ENCODE measurements at regions of chr15 and their contacts with region 1.

Region 1: DNA sequence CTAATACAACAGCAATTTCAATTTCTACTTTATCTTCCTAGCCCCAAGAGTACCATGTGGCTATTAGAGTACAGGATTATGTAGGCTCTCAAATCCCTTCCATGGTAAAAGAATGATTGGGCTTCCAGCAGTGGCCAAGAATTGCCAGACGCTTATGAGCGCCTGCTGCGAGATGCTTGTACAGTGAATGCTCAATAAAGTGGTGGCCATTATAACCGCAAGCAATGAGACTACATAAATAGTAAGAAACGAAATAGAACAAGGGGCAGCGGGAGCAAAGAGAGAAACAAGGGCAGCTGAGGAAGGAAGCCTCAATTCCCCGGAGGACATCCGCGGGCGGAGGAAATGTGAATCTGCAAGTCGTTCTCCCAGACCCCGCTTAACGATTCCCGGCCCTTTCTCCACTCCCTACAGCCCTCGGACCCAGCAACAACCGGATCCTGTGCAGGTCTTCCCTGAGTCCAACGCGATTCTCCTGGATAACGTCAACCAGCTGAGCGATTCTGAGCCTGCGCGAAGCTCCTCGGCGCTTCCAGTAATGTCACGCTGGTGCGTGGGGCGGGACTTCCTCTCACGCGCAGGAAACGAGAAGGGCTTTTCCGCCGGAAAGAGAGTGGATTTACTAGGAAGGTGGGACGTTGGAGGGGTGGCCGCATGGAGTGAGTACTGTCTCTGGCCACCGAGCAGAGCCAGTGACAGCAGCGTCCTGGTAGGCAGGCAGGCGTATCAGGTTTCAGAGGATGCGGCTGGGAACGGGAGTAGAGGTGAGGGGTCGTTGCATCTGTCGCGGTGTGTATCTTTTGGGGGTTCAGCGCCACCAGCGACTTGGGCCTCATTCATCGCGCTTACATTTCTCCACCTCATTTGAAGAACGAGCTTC is 40.5 kb upstream of the AP3B2 start:
- DNase-seq: peak; percentile 90
- H3K4me3 Mint-ChIP-seq: peak overlapping the region; percentile 99
- H3K27ac Mint-ChIP-seq: peak overlapping the region; percentile 94
- H3K4me1 Mint-ChIP-seq: peaks cover 45% of the 10 kb centered on the region
- H3K27me3 Mint-ChIP-seq: no peaks in the 10 kb centered on the region

Region 2: DNA sequence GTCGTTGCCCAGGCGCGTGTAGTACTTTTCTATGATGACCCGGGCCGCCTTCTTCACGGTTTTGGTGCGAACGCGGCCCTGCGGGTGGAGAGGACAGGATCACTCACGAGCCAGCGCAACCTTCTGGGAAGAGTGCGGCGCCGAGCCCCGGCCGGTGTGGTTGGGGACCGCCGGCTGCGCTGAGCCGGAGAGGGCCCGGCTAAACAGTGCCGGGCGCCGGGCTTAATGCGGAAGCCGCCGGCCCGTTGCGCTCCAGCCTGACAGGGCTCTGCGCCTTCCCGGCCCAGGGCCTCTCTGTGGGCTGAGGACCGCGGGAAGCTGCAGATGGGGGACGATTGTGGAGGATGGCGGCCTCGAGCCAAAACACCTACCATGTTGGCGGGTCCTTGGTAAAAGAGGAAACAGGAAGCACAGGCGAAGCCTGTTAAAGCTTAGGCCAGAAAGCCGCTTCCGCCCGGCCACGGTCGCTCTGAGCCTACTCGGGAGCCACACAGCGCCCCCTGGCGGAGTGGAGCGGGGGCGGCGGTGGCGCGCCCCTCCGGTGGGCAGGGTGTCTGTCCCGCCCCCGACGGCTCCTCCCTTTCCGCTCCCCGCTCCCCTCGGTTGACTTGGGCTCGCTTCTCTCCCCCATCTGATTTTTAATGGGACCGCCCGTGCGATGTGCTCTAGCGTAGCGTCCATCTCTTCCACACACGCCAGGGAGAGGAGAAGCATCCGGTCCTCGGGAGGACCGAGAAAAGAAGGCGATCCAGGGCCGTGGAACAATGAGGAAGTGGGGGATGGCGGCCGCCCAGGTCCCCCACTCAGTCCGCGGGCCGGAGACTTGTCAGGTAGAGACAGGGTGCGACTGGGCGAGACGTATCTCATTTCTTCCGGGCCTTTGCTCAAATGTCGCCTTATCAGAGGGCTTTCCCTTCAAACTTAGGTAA is 209.9 kb before region 1 on chr15 and contains the start of gene RPS17:
- CTCF ChIA-PET with region 1: interaction called, 7 read pairs
- intact Hi-C with region 1: loop called (anchors 1 kb)
- DNase-seq: peak; percentile 96
- H3K4me3 Mint-ChIP-seq: peak within 1 kb of the TSS; percentile 85
- H3K27ac Mint-ChIP-seq: peak within 1 kb of the TSS; percentile 96
- H3K4me1 Mint-ChIP-seq: peaks cover 34% of the 10 kb centered on the region
- H3K27me3 Mint-ChIP-seq: no peaks in the 10 kb centered on the region
- total RNA-seq, gene RPS17: 3,025 to 3,069 TPM

Region 3: GRCh38 chr15:82709421-82710207 is 40.6 kb before region 1 on chr15 and contains the start of gene AP3B2:
- CTCF ChIA-PET with region 1: no interaction called
- intact Hi-C with region 1: loop called (anchors 1 kb)
- DNase-seq: peak; percentile 69
- H3K4me3 Mint-ChIP-seq: peak within 1 kb of the TSS; percentile 58
- H3K27ac Mint-ChIP-seq: no peak within 1 kb of the TSS
- H3K4me1 Mint-ChIP-seq: no peaks in the 10 kb centered on the region
- H3K27me3 Mint-ChIP-seq: peaks cover 21% of the 10 kb centered on the region
- total RNA-seq, gene AP3B2: 0.37 to 0.52 TPM

Region 4: DNA sequence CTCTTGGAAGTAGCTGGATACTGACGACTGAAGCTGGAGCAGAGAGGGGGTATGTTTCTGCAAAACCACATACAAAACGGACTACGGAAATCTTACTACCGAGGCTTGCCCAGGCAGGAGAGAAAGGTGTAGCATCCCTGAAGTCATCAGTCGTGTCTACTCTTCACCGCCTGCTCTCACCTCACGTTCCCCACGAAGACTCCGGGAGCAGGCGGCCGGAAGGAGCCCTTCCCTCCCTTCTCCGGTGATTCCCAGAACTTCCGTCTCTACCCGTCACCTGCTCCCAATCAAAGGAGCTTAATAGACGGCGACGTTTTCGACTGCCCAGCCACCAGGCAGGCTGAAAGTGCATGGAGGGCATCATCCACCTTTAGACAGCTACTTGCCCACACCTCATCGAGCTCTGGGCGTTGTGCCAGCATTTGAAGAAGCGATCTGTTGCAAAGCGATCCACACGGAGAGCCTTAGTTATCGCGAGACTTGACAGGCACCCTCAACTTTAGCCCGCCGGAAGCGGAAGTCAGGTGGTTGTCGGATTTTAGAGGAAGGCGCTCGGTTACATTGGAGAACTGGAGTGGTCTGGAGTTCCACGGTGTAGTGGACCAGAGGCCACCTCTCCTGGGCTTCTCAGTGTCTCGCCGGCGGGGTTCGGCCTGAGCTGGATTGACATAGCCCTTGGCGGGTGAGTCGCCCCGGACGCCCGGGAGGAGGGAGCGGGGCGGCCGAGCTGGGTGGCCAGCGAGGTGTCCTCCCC is 235.7 kb after region 1 on chr15 and contains the start of gene RAMAC:
- CTCF ChIA-PET with region 1: interaction called, 3 read pairs
- intact Hi-C with region 1: loop called (anchors 2 kb)
- DNase-seq: peak; percentile 96
- H3K4me3 Mint-ChIP-seq: peak within 1 kb of the TSS; percentile 96
- H3K27ac Mint-ChIP-seq: peak within 1 kb of the TSS; percentile 94
- H3K4me1 Mint-ChIP-seq: peaks cover 25% of the 10 kb centered on the region
- H3K27me3 Mint-ChIP-seq: no peaks in the 10 kb centered on the region
- total RNA-seq, gene RAMAC: 15.3 to 15.6 TPM

Region 5: DNA sequence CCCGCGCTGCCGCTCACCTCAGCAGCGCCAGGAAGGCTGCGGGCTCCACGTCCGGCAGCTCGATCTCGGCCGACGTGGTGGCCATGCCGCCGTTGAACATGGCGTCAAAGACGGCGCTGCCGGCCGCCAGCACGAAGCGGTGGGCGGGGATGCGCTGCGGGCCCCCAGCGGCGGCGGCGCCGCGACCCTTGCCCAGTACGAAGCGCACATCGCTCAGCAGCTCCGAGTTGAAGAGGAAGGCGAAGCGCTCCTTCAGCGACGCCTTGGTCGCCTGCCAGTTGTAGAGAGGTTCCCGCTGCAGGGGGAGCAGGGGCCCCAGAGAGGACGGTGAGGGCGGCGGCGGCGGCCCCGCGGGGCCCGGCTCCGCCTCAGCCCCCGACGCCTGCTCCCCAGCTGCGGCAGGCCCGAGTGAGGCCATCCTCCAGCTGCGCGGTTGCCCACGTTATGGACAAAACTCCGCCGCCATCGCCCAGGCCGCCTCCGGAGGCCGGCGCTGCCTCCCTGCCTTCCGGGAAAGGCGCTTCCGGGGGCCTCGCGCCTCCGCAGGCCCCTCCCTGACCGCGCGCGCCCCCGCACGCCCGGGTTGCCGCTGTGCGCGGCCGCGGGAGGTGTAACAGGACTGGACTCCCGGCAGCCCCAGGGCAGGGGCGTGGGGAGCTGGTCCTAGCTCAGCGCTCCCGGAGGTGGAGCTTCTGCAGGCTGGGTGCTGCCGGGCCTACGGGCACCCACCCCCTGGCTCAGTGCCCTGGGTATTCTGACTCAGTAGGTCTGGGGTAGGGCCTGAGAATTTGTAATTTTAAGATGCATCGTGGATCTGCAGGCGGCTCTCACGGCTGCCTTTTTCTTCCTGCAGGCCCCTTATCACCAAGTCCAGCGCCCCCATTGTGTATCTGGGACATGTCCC is 316.8 kb after region 1 on chr15 and contains the start of gene BTBD1:
- CTCF ChIA-PET with region 1: no interaction called
- intact Hi-C with region 1: loop called (anchors 5 kb)
- DNase-seq: peak; percentile 92
- H3K4me3 Mint-ChIP-seq: peak within 1 kb of the TSS; percentile 84
- H3K27ac Mint-ChIP-seq: peak within 1 kb of the TSS; percentile 83
- H3K4me1 Mint-ChIP-seq: peaks cover 22% of the 10 kb centered on the region
- H3K27me3 Mint-ChIP-seq: no peaks in the 10 kb centered on the region
- total RNA-seq, gene BTBD1: 45.2 to 46.1 TPM

Region 6: DNA sequence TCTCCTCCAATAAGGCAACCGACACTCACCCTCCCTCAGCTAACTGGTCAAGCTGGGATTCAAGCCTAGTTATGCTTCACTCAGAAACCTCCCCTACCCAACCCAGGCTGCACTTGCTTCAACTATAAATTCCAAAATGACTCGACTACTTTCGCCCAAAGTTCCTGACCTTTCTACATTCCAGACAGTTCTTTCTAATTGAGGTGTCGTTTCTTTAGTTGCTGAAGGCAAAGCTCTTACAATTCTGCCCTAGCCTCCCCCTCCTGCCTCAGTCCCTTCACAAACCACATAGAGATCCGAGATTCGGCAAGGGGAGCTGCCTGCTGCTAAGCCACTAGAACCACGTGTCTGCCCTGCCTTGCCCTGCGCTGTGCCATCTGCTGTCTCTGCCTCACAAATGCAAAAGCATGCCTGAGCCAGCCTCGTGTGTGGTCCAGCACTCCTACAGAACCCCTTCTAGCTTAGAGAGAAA is 622.3 kb after region 1 on chr15:
- CTCF ChIA-PET with region 1: no interaction called
- intact Hi-C with region 1: no loop called
- DNase-seq: no peak
- H3K4me3 Mint-ChIP-seq: no peak overlapping the region
- H3K27ac Mint-ChIP-seq: no peak overlapping the region
- H3K4me1 Mint-ChIP-seq: no peaks in the 10 kb centered on the region
- H3K27me3 Mint-ChIP-seq: peaks cover 48% of the 10 kb centered on the region

Measured in activated naive CD4-positive, alpha-beta T cell treated with anti-CD3 and anti-CD28 coated beads for 36 hours (primary cell).